ENCODE measurements at regions of chr16 and their contacts with region 1.

Region 1: GRCh38 chr16:60949800-60950199 is 1086.4 kb downstream of the CDH8 start:
- DNase-seq: no peak
- ATAC-seq: no peak
- H3K4me3 ChIP-seq: no peak overlapping the region
- H3K27ac ChIP-seq: no peak overlapping the region
- H3K4me1 ChIP-seq: no peaks in the 10 kb centered on the region
- H3K27me3 ChIP-seq: no peaks in the 10 kb centered on the region
- CTCF ChIP-seq: no peak
- POLR2A ChIP-seq: no peak
- RAD21 ChIP-seq: no peak

Region 2: GRCh38 chr16:60902114-60902513 is 47.7 kb before region 1 on chr16:
- CTCF ChIA-PET with region 1: no interaction called
- POLR2A ChIA-PET with region 1: no interaction called
- RAD21 ChIA-PET with region 1: no interaction called
- intact Hi-C with region 1: loop called (anchors 10 kb)
- DNase-seq: no peak
- ATAC-seq: no peak
- H3K4me3 ChIP-seq: no peak overlapping the region
- H3K27ac ChIP-seq: no peak overlapping the region
- H3K4me1 ChIP-seq: no peaks in the 10 kb centered on the region
- H3K27me3 ChIP-seq: no peaks in the 10 kb centered on the region
- CTCF ChIP-seq: no peak
- POLR2A ChIP-seq: no peak
- RAD21 ChIP-seq: no peak